ENCODE measurements at regions of chr7 and their contacts with region 1.

Region 1: GRCh38 chr7:124459101-124460055 is 306.2 kb downstream of the GPR37 start:
- DNase-seq: no peak
- ATAC-seq: no peak
- H3K4me3 ChIP-seq: no peak overlapping the region
- H3K27ac ChIP-seq: no peak overlapping the region
- H3K4me1 ChIP-seq: peaks cover 20% of the 10 kb centered on the region
- H3K27me3 ChIP-seq: no peaks in the 10 kb centered on the region
- CTCF ChIP-seq: no peak

Region 2: GRCh38 chr7:123974326-123974908 is 485.0 kb before region 1 on chr7:
- CTCF ChIA-PET with region 1: no interaction called
- POLR2A ChIA-PET with region 1: no interaction called
- intact Hi-C with region 1: no loop called
- DNase-seq: no peak
- ATAC-seq: no peak
- H3K4me3 ChIP-seq: no peak overlapping the region
- H3K27ac ChIP-seq: no peak overlapping the region
- H3K4me1 ChIP-seq: no peaks in the 10 kb centered on the region
- H3K27me3 ChIP-seq: no peaks in the 10 kb centered on the region
- CTCF ChIP-seq: no peak

Region 3: DNA sequence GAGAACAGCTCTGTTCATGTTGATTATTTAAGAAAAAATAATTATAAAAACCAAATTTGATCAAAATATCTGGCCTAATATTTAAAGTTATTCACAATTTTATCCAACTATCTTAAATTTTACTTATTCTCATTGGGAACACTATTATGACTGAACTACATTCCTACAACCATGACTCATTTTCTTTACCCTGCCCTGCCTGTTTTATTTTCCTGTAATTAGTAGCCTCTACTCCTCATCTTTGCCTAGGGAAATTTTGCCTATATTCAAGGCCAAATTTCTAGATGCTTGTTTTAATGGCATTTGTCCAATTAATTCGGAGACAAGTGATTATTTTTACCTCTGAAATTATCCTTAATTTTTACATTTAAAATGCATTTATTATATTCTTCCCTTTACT is 136.8 kb before region 1 on chr7:
- CTCF ChIA-PET with region 1: no interaction called
- POLR2A ChIA-PET with region 1: no interaction called
- intact Hi-C with region 1: loop called (anchors 5 kb)
- DNase-seq: peak; percentile 62
- ATAC-seq: peak; percentile 29; the same call in 1 of the 2 replicates
- H3K4me3 ChIP-seq: no peak overlapping the region
- H3K27ac ChIP-seq: no peak overlapping the region
- H3K4me1 ChIP-seq: peaks cover 47% of the 10 kb centered on the region
- H3K27me3 ChIP-seq: no peaks in the 10 kb centered on the region
- CTCF ChIP-seq: no peak

Region 4: DNA sequence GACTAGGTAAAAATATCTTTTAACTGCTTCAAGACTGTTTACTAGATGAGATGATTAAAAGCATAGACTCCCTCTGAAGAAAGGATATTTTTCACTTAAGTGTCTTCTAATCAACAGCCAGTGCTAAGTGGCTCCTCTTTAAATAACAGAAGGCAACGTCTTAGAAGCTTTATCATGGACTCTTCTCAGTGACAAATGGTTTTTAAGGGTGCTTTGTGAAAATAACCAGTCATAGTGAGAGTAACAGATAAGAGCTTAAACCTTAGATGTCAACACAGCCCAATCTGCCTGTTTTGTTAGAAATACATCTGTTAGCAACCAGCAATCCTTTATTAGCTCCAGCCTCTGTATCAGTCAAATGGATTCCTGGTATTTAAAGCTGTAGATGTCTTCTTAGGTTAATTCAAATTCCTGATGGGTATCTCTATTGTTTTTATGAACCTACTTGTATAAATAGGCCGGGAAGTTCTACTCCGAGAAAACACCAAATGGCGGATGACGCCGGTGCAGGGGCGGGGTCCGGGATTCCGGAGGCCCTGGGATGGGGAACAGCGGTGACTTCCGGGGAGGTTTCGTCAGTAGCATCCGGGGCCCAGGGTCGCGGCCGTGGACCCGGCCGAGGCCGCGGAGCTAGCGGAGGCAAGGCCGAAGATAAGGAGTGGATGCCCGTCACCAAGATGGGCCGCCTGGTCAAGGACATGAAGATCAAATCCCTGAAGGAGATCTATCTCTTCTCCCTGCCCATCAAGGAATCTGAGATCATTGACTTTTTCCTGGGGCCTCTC is 20.9 kb after region 1 on chr7:
- CTCF ChIA-PET with region 1: no interaction called
- POLR2A ChIA-PET with region 1: interaction called, 4 read pairs
- intact Hi-C with region 1: loop called (anchors 2 kb)
- DNase-seq: no peak
- ATAC-seq: no peak
- H3K4me3 ChIP-seq: no peak overlapping the region
- H3K27ac ChIP-seq: no peak overlapping the region
- H3K4me1 ChIP-seq: peaks cover 16% of the 10 kb centered on the region
- H3K27me3 ChIP-seq: no peaks in the 10 kb centered on the region
- CTCF ChIP-seq: no peak

Region 5: DNA sequence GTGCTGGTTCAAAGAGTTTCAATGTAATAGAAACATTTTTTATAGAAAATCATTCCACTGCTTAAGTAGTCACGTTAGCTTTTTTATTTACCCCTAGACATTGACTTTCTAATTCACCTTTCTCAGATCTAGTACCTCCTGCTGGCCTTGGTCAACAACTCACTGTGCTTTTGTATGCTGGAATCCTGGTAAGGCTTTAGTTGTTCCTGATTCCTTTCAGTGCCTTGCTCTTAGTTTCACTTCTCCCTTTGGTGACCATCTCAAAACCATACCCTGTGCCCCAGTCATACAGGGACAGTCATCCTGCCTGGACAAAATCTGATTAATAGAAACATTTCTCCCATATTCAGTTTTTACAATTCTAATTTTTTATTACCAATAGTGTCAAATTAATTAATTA is 176.0 kb after region 1 on chr7:
- CTCF ChIA-PET with region 1: no interaction called
- POLR2A ChIA-PET with region 1: no interaction called
- intact Hi-C with region 1: no loop called
- DNase-seq: no peak
- ATAC-seq: no peak
- H3K4me3 ChIP-seq: no peak overlapping the region
- H3K27ac ChIP-seq: no peak overlapping the region
- H3K4me1 ChIP-seq: no peaks in the 10 kb centered on the region
- H3K27me3 ChIP-seq: no peaks in the 10 kb centered on the region
- CTCF ChIP-seq: no peak

Region 6: DNA sequence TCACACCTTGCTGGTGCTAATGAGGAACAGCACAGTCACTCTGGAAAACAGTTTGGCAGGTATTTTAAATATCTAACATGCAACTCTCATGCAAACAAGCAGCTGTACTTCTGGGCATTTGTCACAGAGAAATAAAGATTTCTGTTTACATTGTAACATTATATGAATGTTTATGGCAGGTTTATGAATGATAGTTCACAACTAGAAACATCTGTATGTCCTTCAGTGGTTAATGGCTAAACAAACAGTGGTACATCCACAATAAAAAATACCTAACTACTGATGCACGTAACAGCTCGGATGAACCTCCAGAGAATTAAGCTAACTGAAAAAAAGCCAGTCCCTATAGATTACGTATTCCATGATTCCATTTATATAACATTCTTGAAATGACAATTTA is 196.6 kb after region 1 on chr7:
- CTCF ChIA-PET with region 1: no interaction called
- POLR2A ChIA-PET with region 1: no interaction called
- intact Hi-C with region 1: loop called (anchors 5 kb)
- DNase-seq: peak; percentile 74
- ATAC-seq: peak; percentile 92
- H3K4me3 ChIP-seq: no peak overlapping the region
- H3K27ac ChIP-seq: no peak overlapping the region
- H3K4me1 ChIP-seq: peaks cover 14% of the 10 kb centered on the region
- H3K27me3 ChIP-seq: no peaks in the 10 kb centered on the region
- CTCF ChIP-seq: no peak

Measured in PC-3 (cell line).